ENCODE measurements at regions of chr3 and their contacts with region 1.

Region 1: DNA sequence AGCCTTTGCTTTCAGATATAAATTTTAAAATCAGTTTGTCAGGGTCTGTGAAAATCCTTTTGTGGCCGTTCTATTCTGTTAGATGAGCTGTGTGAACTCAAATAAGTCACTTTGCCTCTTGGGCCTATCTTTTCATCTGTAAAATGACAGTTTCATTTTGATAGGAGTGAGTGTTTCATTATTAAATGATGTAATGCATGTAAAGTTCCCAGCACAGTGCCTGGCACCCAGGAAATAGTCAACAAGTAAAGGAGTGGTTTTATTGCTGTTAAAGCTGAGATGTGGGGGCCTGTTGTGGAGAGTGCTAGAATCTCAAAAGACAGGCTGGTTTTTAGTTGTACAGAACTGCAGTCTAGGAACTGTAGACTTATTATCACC is 394.5 kb upstream of the CFAP20DC start:
- DNase-seq: no peak
- ATAC-seq: peak; percentile 86
- H3K4me3 ChIP-seq: no peak overlapping the region
- H3K27ac ChIP-seq: peak overlapping the region; percentile 72
- H3K4me1 ChIP-seq: peaks cover 10% of the 10 kb centered on the region
- H3K27me3 ChIP-seq: no peaks in the 10 kb centered on the region
- CTCF ChIP-seq: no peak
- EP300 ChIP-seq: no peak
- POLR2A ChIP-seq: no peak
- RAD21 ChIP-seq: no peak

Region 2: GRCh38 chr3:59235634-59236012 is 208.7 kb before region 1 on chr3:
- CTCF ChIA-PET with region 1: no interaction called
- POLR2A ChIA-PET with region 1: interaction called, 3 read pairs
- RAD21 ChIA-PET with region 1: interaction called, 10 read pairs
- SMC1A ChIA-PET with region 1: interaction called, 11 read pairs
- in situ Hi-C with region 1: no loop called
- intact Hi-C with region 1: no loop called
- DNase-seq: peak; percentile 46
- ATAC-seq: peak; percentile 94
- H3K4me3 ChIP-seq: no peak overlapping the region
- H3K27ac ChIP-seq: no peak overlapping the region
- H3K4me1 ChIP-seq: peaks cover 3% of the 10 kb centered on the region
- H3K27me3 ChIP-seq: no peaks in the 10 kb centered on the region
- CTCF ChIP-seq: no peak
- EP300 ChIP-seq: peak; percentile 56 to 81; a peak in 3 of 4 replicates
- POLR2A ChIP-seq: no peak
- RAD21 ChIP-seq: no peak

Region 3: GRCh38 chr3:59374818-59375211 is 69.5 kb before region 1 on chr3:
- CTCF ChIA-PET with region 1: no interaction called
- POLR2A ChIA-PET with region 1: no interaction called
- RAD21 ChIA-PET with region 1: interaction called, 5 read pairs
- SMC1A ChIA-PET with region 1: interaction called, 13 read pairs
- in situ Hi-C with region 1: no loop called
- intact Hi-C with region 1: no loop called
- DNase-seq: peak; percentile 91
- ATAC-seq: peak; percentile 99
- H3K4me3 ChIP-seq: no peak overlapping the region
- H3K27ac ChIP-seq: no peak overlapping the region
- H3K4me1 ChIP-seq: peaks cover 9% of the 10 kb centered on the region
- H3K27me3 ChIP-seq: no peaks in the 10 kb centered on the region
- CTCF ChIP-seq: no peak; a peak in 1 of 6 replicates
- EP300 ChIP-seq: 0 out of 4 replicates have a peak, but pooled peaks of 1 of the 2 experiments have one; percentile 57
- POLR2A ChIP-seq: no peak
- RAD21 ChIP-seq: peak; percentile 31; the same call in 1 of the 2 replicates

Region 4: DNA sequence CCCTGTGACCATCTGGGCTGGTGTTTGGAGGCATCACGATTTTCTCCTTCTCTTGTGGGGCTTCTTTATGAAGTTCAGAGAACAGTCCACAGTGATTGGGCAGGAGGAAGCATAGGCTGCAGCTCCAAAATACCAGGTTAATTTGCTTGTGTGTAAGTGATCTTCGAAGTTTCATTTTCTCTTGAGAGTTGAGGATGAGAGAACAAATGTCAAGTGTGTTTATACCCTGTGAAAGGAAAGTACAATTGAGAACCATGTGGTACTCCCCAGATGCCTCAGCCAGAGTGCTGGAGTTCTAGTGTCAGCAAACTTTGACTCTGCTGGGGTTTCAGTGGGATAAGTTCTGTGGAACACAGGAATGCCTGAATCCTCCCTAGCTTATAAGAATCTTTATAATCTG is 37.3 kb before region 1 on chr3:
- CTCF ChIA-PET with region 1: interaction called, 4 read pairs
- POLR2A ChIA-PET with region 1: interaction called, 3 read pairs
- RAD21 ChIA-PET with region 1: interaction called, 8 read pairs
- SMC1A ChIA-PET with region 1: interaction called, 23 read pairs
- in situ Hi-C with region 1: no loop called
- intact Hi-C with region 1: no loop called
- DNase-seq: peak; percentile 53
- ATAC-seq: peak; percentile 91
- H3K4me3 ChIP-seq: no peak overlapping the region; the same call in 1 of the 2 replicates
- H3K27ac ChIP-seq: peak overlapping the region; percentile 30
- H3K4me1 ChIP-seq: peaks cover 19% of the 10 kb centered on the region
- H3K27me3 ChIP-seq: no peaks in the 10 kb centered on the region
- CTCF ChIP-seq: no peak
- EP300 ChIP-seq: no peak
- POLR2A ChIP-seq: no peak
- RAD21 ChIP-seq: no peak

Region 5: GRCh38 chr3:59456852-59457485 is 12.7 kb after region 1 on chr3:
- CTCF ChIA-PET with region 1: interaction called, 6 read pairs
- POLR2A ChIA-PET with region 1: interaction called, 6 read pairs
- RAD21 ChIA-PET with region 1: interaction called, 17 read pairs
- SMC1A ChIA-PET with region 1: interaction called, 28 read pairs
- in situ Hi-C with region 1: no loop called
- intact Hi-C with region 1: no loop called
- DNase-seq: peak; percentile 67
- ATAC-seq: peak; percentile 93
- H3K4me3 ChIP-seq: no peak overlapping the region
- H3K27ac ChIP-seq: peak overlapping the region; percentile 71
- H3K4me1 ChIP-seq: peaks cover 23% of the 10 kb centered on the region
- H3K27me3 ChIP-seq: no peaks in the 10 kb centered on the region
- CTCF ChIP-seq: no peak
- EP300 ChIP-seq: peak; percentile 70 to 88; a peak in 3 of 4 replicates
- POLR2A ChIP-seq: no peak
- RAD21 ChIP-seq: peak; percentile 33; the same call in 1 of the 2 replicates

Measured in GM12878 (cell line).